ENCODE measurements at regions of chr2 and their contacts with region 1.

Region 1: DNA sequence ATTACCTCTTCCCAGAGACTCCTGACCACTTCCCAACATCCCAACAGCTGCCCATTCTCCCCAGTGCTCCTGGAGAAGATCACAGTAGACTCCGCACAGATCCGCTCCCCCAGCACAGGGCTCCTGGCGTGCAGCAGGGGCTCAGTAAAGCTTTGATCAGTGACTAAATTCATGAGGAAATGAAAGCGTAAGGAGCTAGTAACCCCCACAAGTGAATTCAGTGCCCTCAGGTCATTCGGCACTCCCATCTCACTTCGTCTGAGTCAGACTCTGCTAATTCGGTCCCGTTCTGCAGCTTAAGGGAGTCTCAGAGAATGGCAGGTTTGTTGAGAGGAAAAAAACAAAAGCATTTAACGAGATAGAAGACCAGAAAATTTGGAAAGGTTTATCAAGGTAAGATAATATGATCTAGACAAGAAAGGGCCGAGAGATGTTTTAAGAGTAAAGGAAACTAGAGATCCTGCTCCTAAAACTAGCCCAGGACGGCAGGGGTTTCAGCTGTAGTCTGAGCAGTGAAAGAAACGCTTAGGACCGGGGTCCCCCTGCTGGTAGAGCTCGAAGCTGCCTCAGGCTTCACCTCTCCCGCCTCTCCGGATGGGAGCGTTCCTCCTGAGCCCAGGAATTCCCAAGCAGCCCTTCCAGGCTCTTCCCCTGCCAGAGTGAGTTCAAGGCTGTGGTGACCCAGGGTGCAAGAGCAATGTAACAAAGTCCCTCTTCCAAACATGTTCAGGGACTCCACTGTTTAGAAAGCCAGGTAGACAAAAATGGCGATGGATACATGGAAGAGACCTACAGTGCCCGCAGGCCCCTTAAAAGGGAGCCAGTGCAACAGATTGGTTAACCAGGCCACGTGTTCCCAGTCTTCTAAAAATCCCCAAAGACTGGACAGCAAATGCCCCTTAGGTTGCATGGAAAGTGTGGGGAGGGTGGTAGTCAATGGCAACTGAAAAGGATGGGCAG is 127.3 kb downstream of the DNER start:
- DNase-seq: peak; percentile 76 to 80
- ATAC-seq: peak; percentile 93 to 97 (median 96)
- H3K4me3 ChIP-seq: peak overlapping the region in 6 of 10 donors; percentile 1 to 39 (median 36)
- H3K27ac ChIP-seq: no peak overlapping the region
- H3K4me1 ChIP-seq: peaks cover 0 to 8% (median 0%) of the 10 kb centered on the region in 9 donors
- H3K27me3 ChIP-seq: peaks cover 0 to 15% (median 0%) of the 10 kb centered on the region in 7 donors
- CTCF ChIP-seq: peak; percentile 73 to 93 (median 89)

Region 2: GRCh38 chr2:228681426-228681825 is 905.6 kb before region 1 on chr2:
- intact Hi-C with region 1: loop called in 4 of 10 experiments (anchors 10 kb)
- DNase-seq: no peak
- ATAC-seq: peak in 2 of 8 donors; percentile 30 to 47
- H3K4me3 ChIP-seq: no peak overlapping the region
- H3K27ac ChIP-seq: no peak overlapping the region
- H3K4me1 ChIP-seq: no peaks in the 10 kb centered on the region
- H3K27me3 ChIP-seq: no peaks in the 10 kb centered on the region
- CTCF ChIP-seq: peak in 8 of 9 donors; percentile 14 to 59 (median 50)

Region 3: GRCh38 chr2:229133155-229133772 is 453.8 kb before region 1 on chr2:
- intact Hi-C with region 1: loop called in 7 of 10 experiments (anchors 5 to 10 kb)
- DNase-seq: peak in 1 of 2 donors; percentile 18
- ATAC-seq: peak in 2 of 8 donors; percentile 50 to 51
- H3K4me3 ChIP-seq: no peak overlapping the region
- H3K27ac ChIP-seq: no peak overlapping the region
- H3K4me1 ChIP-seq: peaks cover 0 to 15% (median 8%) of the 10 kb centered on the region in 9 donors
- H3K27me3 ChIP-seq: no peaks in the 10 kb centered on the region
- CTCF ChIP-seq: peak; percentile 14 to 65 (median 49)

Region 4: GRCh38 chr2:229342376-229342775 is 244.7 kb before region 1 on chr2:
- intact Hi-C with region 1: loop called in 5 of 10 experiments (anchors 5 to 10 kb)
- DNase-seq: peak; percentile 15 to 49
- ATAC-seq: peak in 1 of 8 donors; percentile 9
- H3K4me3 ChIP-seq: no peak overlapping the region
- H3K27ac ChIP-seq: no peak overlapping the region
- H3K4me1 ChIP-seq: peaks cover 0 to 7% (median 0%) of the 10 kb centered on the region in 9 donors
- H3K27me3 ChIP-seq: peaks cover 0 to 6% (median 0%) of the 10 kb centered on the region in 7 donors
- CTCF ChIP-seq: peak in 7 of 9 donors; percentile 29 to 53 (median 37)

Region 5: DNA sequence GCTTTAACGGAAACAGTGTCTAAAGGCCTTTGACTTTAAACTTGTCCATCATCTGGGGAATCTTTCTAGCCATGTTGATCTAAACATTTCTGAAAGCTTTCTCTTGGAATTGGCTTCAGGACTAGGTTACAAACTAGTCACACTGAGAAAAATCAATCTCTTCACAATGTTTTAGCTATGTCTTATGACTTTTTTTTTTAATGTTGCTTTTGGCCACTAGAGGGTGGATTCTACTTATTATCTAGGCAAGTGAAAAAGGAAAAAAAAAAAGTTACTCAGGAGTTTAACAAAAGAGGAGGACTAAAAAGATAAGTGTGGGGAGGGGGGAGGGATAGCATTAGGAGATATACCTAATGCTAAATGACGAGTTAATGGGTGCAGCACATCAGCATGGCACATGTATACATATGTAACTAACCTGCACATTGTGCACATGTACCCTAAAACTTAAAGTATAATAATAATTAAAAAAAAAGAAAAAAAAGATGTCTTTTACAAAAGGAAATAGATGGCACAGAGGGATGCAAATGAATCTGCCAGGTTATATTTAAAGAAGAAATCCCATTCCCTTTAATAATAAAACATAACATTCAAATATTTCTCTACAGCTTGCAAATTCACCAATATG is 155.6 kb before region 1 on chr2:
- intact Hi-C with region 1: loop called (anchors 1 to 5 kb)
- DNase-seq: no peak
- ATAC-seq: peak in 1 of 8 donors; percentile 41
- H3K4me3 ChIP-seq: no peak overlapping the region
- H3K27ac ChIP-seq: peak overlapping the region in 1 of 10 donors; percentile 35
- H3K4me1 ChIP-seq: peaks cover 0 to 12% (median 0%) of the 10 kb centered on the region in 9 donors
- H3K27me3 ChIP-seq: no peaks in the 10 kb centered on the region
- CTCF ChIP-seq: peak in 8 of 9 donors; percentile 44 to 62 (median 51)

Region 6: GRCh38 chr2:230124757-230125431 is 537.9 kb after region 1 on chr2:
- intact Hi-C with region 1: no loop called
- DNase-seq: peak in 1 of 2 donors; percentile 17
- ATAC-seq: peak in 3 of 8 donors; percentile 44 to 52 (median 52)
- H3K4me3 ChIP-seq: peak overlapping the region in 1 of 10 donors; percentile 30
- H3K27ac ChIP-seq: peak overlapping the region in 1 of 10 donors; percentile 50
- H3K4me1 ChIP-seq: peaks cover 0 to 53% (median 10%) of the 10 kb centered on the region in 9 donors
- H3K27me3 ChIP-seq: no peaks in the 10 kb centered on the region
- CTCF ChIP-seq: no peak

Measured in heart right ventricle (tissue), 16 donors.